Aorta (tissue), 5 donors: ENCODE measurements at regions of chr12 and their contacts with region 1.

Region 1: DNA sequence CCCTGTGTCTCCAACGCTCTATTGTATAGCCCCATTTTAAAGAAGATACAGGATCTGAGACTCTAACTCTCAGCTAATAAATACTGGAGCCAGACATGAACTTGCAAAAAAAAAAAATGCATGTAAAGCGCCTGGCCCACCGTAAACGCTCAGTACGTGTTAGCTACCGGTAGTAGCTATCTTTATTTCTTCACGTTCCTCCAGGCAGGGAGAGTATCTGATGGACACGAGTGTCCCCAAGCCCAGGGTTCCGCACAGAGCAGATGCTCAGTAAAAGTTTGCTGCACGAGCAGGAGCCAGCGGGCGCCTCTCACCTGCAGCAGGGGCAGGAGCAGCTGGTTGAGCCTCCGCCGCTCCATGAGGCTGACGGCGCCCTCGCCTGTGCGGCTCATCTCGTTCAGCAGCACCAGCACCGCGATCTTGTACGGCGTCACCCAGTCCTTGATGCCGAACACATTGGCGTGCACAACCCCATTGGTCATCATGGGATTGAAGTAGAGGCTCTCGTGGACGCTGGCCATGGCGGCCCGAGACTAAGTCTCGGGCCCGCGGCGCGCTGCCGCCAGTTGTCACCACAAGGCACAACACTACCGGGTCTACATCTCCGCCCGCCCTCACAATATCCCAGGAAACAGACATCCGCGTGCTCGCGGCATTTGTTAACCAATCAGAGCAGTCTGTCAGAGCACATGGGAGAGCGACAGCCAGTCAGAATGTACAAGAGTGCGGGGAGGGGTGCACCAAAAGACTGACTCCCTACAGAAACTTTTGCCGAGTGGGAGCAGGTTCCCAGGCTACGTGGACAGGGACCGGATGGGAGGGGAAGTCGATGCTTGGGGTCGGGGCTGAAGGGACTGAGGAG is at the start of gene ANAPC5:
- DNase-seq: peak; percentile 96 to 97
- ATAC-seq: peak; percentile 100
- H3K4me3 ChIP-seq: peak within 1 kb of the TSS; percentile 78 to 92
- H3K27ac ChIP-seq: peak within 1 kb of the TSS in 1 of 2 donors; percentile 65
- H3K4me1 ChIP-seq: no peaks in the 10 kb centered on the region
- H3K27me3 ChIP-seq: no peaks in the 10 kb centered on the region
- total RNA-seq, gene ANAPC5: 105 to 118 TPM

Region 2: GRCh38 chr12:121399391-121400331 is 47.6 kb after region 1 on chr12 and contains the start of gene RNF34:
- intact Hi-C with region 1: loop called (anchors 5 kb)
- DNase-seq: peak; percentile 99
- ATAC-seq: peak; percentile 99
- H3K4me3 ChIP-seq: peak within 1 kb of the TSS; percentile 58 to 68
- H3K27ac ChIP-seq: peak within 1 kb of the TSS in 1 of 2 donors; percentile 41
- H3K4me1 ChIP-seq: no peaks in the 10 kb centered on the region
- H3K27me3 ChIP-seq: no peaks in the 10 kb centered on the region
- total RNA-seq, gene RNF34: 26.9 to 30.9 TPM